ENCODE measurements at regions of chr12 and their contacts with region 1.

Region 1: GRCh38 chr12:122793685-122794106 is 19.3 kb downstream of the CCDC62 start:
- DNase-seq: peak; percentile 19
- H3K4me3 ChIP-seq: no peak overlapping the region
- H3K27ac ChIP-seq: no peak overlapping the region
- H3K4me1 ChIP-seq: no peaks in the 10 kb centered on the region
- H3K27me3 ChIP-seq: no peaks in the 10 kb centered on the region
- CTCF ChIP-seq: peak; percentile 68

Region 2: GRCh38 chr12:122265931-122266771 is 527.5 kb before region 1 on chr12 and contains the start of gene VPS33A:
- intact Hi-C with region 1: no loop called
- DNase-seq: peak; percentile 96
- H3K4me3 ChIP-seq: peak within 1 kb of the TSS; percentile 91
- H3K27ac ChIP-seq: peak within 1 kb of the TSS; percentile 93
- H3K4me1 ChIP-seq: peaks cover 8% of the 10 kb centered on the region
- H3K27me3 ChIP-seq: no peaks in the 10 kb centered on the region
- CTCF ChIP-seq: no peak
- total RNA-seq, gene VPS33A: 18.6 to 24.0 TPM

Region 3: GRCh38 chr12:122726080-122726558 is 67.6 kb before region 1 on chr12:
- intact Hi-C with region 1: no loop called
- DNase-seq: no peak
- H3K4me3 ChIP-seq: no peak overlapping the region
- H3K27ac ChIP-seq: no peak overlapping the region
- H3K4me1 ChIP-seq: no peaks in the 10 kb centered on the region
- H3K27me3 ChIP-seq: no peaks in the 10 kb centered on the region
- CTCF ChIP-seq: no peak

Region 4: GRCh38 chr12:122841544-122842321 is 48.0 kb after region 1 on chr12:
- intact Hi-C with region 1: no loop called
- DNase-seq: no peak
- H3K4me3 ChIP-seq: no peak overlapping the region
- H3K27ac ChIP-seq: no peak overlapping the region
- H3K4me1 ChIP-seq: peaks cover 8% of the 10 kb centered on the region
- H3K27me3 ChIP-seq: no peaks in the 10 kb centered on the region
- CTCF ChIP-seq: no peak

Region 5: GRCh38 chr12:122860346-122861090 is 66.8 kb after region 1 on chr12:
- intact Hi-C with region 1: loop called (anchors 5 kb)
- DNase-seq: peak; percentile 89
- H3K4me3 ChIP-seq: no peak overlapping the region
- H3K27ac ChIP-seq: no peak overlapping the region
- H3K4me1 ChIP-seq: peaks cover 10% of the 10 kb centered on the region
- H3K27me3 ChIP-seq: no peaks in the 10 kb centered on the region
- CTCF ChIP-seq: peak; percentile 84

Measured in colonic mucosa (tissue), 4 donors.